K562 (cell line): ENCODE measurements at regions of chr6 and their contacts with region 1.

Region 1: DNA sequence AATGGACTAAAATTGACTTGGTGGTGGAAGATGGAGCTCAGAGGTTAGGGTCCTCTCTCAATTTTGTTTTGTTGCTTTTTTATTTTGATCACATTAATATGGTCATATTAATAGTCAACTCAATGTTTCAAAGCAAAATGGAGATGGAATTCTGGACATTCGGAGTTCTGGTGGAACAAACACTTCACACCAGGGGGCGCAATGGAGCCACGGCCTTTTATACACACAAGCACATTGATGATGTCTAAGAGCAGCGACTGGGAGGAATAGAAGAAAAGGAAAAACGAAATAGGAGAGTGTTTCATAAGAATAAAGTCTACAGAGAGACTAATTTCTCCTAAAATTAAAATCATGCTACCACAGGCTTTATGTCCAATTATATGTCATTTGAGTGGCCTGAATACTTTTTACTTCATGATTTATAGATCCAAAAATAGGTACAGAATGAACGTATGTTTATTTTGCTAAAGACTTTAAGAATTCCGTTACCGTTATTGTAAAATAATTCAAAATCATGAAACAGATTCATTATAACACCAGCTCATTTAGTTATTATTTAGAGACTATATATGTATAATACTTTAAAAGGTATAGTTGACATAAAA is 197.6 kb upstream of the SASH1 start:
- DNase-seq: peak; percentile 71 to 88 (median 72)
- ATAC-seq: peak; percentile 92
- H3K4me3 ChIP-seq: 0 out of 2 replicates have a peak overlapping the region, but pooled peaks have one; percentile 5
- H3K27ac ChIP-seq: no peak overlapping the region
- H3K4me1 ChIP-seq: no peaks in the 10 kb centered on the region
- H3K27me3 ChIP-seq: 0 out of 5 replicates have a peak, but pooled peaks cover 0 to 3% of the 10 kb centered on the region in 2 experiments
- CTCF ChIP-seq: peak; percentile 84 to 92 (median 89)
- EP300 ChIP-seq: no peak
- POLR2A ChIP-seq: no peak
- RAD21 ChIP-seq: peak; percentile 61 to 72

Region 2: DNA sequence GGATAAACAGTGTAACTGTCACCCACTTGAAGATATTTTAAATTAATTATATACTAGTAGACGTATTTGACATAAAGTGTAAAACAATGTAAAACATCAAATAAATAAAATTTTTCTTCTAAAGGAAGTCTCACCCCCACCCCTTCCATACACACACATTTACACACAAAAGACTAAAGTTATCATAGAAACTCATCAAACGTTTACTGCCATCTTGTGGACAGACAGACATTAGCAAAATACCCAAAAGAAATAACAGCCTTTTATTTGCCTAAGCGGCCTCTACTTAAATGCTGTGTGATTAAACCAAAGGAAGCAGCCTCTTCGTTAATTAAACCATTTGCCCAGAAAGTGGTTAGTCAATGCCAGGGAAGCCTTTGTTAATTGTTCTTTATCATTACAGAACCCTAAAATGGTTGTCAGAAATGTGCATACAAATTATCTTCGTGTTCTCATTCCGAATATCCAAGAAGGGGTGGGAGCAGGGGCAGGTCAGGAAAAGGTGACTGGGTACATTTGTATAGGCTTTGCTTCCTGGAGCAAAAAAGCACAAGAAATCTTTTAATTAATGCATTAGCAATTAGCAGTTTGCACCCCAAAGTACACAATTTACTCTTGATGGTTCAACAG is 21.4 kb after region 1 on chr6:
- CTCF ChIA-PET with region 1: no interaction called
- POLR2A ChIA-PET with region 1: no interaction called
- in situ Hi-C with region 1: no loop called
- intact Hi-C with region 1: loop called (anchors 1 kb)
- DNase-seq: peak; percentile 43 to 65 (median 60)
- ATAC-seq: peak; percentile 84
- H3K4me3 ChIP-seq: no peak overlapping the region
- H3K27ac ChIP-seq: no peak overlapping the region
- H3K4me1 ChIP-seq: peaks cover 0 to 4% of the 10 kb centered on the region in 2 experiments; a peak in 1 of 5 replicates
- H3K27me3 ChIP-seq: peaks cover 6 to 7% of the 10 kb centered on the region in 2 experiments; a peak in 3 of 5 replicates
- CTCF ChIP-seq: peak; percentile 48 to 81 (median 54); a peak in 5 of 6 replicates
- EP300 ChIP-seq: no peak
- POLR2A ChIP-seq: no peak
- RAD21 ChIP-seq: peak; percentile 74 to 85

Region 3: DNA sequence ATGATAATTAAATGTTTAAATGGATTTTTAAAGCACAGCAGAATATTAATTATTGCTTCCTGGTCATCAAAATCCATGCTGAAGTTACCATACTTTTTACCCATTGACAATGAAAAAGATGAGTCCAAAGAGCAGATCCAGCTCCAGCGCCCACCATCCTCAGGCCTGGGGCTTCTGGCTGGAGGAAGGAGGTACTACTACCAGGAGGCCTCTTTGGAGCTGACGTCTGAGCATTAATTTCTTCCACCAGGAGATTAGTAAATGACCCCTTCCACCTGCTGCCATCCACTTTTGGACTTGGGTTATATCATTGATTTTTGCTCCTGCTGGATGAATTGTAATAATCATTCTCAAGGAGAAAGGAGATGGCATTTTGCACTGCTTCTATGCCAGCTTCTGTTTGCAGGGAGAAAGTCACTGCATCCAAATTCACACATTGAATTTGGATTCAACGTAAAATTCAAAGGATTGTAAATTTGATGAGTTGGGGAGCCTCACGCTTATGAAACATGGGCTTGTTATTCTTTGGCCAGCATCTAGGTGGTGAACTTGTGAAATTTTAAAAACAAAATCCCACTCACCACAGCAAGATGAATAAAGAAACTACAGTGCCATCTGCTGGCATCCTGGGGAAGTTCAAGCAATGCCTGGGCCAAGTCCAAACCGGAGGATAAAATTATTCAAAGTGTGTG is 319.4 kb after region 1 on chr6:
- CTCF ChIA-PET with region 1: interaction called, 8 read pairs
- POLR2A ChIA-PET with region 1: no interaction called
- in situ Hi-C with region 1: no loop called
- intact Hi-C with region 1: loop called (anchors 10 kb)
- DNase-seq: peak; percentile 71 to 77 (median 72)
- ATAC-seq: peak; percentile 97
- H3K4me3 ChIP-seq: no peak overlapping the region
- H3K27ac ChIP-seq: no peak overlapping the region
- H3K4me1 ChIP-seq: no peaks in the 10 kb centered on the region
- H3K27me3 ChIP-seq: peaks cover 8 to 13% of the 10 kb centered on the region in 2 experiments; a peak in 3 of 5 replicates
- CTCF ChIP-seq: peak; percentile 91 to 98 (median 94)
- EP300 ChIP-seq: no peak
- POLR2A ChIP-seq: no peak
- RAD21 ChIP-seq: peak; percentile 81 to 85